IMR-90 (cell line): ENCODE measurements at regions of chr19 and their contacts with region 1.

Region 1: DNA sequence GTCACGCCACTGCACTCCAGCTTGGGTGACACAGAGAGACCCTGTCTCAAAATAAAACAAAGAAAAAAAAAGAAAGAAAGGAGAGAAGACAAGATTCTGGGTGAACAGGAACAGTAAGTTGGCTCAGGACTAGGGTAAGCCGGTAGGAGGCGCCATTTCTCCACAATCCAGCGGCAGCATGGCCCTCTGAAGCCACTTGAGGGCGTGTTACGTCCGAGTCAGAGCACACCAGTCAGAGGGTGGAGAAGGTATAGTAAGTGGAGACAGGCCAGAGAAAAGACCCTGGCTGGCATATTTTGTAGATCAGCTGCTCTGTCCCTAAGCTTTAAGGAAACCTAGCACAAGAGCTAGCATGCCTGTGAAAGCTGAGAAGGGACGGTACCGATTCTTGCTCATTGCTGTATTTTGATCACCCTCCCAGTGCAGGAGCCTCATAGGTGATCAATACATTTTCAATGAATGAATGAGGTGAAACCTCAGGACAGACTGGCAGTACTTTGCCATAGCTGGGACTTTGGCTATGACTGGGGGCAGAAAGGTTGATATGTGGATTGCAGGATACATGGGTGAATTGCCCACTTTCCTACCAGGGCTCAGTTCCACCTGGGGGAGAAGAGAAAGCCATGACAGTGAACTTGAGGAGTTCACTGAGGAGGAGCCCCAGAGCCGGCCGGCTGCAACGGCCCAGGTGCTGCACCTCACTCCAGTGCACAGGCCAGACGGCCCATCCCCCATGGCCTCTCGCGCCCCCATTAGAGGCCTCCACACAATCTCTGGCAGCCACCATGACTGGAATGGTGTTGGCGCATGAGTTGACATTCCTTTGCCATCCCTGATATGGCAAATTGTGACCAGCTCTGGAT is 23.5 kb downstream of the POU2F2 start:
- DNase-seq: peak; percentile 89
- ATAC-seq: peak; percentile 82
- H3K4me3 ChIP-seq: no peak overlapping the region
- H3K27ac ChIP-seq: no peak overlapping the region
- H3K4me1 ChIP-seq: peaks cover 19% of the 10 kb centered on the region
- H3K27me3 ChIP-seq: peaks cover 3% of the 10 kb centered on the region; the same call in 1 of the 2 replicates
- CTCF ChIP-seq: peak; percentile 100; the same call in 1 of the 2 replicates
- POLR2A ChIP-seq: peak; percentile 69
- RAD21 ChIP-seq: peak; percentile 100

Region 2: GRCh38 chr19:41993612-41994483 is 114.9 kb before region 1 on chr19 and contains the start of gene ATP1A3:
- CTCF ChIA-PET with region 1: no interaction called
- POLR2A ChIA-PET with region 1: no interaction called
- dilution Hi-C with region 1: no loop called
- in situ Hi-C with region 1: no loop called
- intact Hi-C with region 1: no loop called
- DNase-seq: peak; percentile 21
- ATAC-seq: peak; percentile 90
- H3K4me3 ChIP-seq: 0 out of 2 replicates have a peak within 1 kb of the TSS, but pooled peaks have one; percentile 16
- H3K27ac ChIP-seq: no peak within 1 kb of the TSS
- H3K4me1 ChIP-seq: no peaks in the 10 kb centered on the region
- H3K27me3 ChIP-seq: peaks cover 65% of the 10 kb centered on the region
- CTCF ChIP-seq: no peak
- POLR2A ChIP-seq: no peak
- RAD21 ChIP-seq: no peak
- total RNA-seq, gene ATP1A3: under 0.01 TPM in 2 replicates

Region 3: GRCh38 chr19:42184401-42184861 is 75.7 kb after region 1 on chr19:
- CTCF ChIA-PET with region 1: interaction called, 9 read pairs
- POLR2A ChIA-PET with region 1: no interaction called
- dilution Hi-C with region 1: no loop called
- in situ Hi-C with region 1: loop called (anchors 5 kb)
- intact Hi-C with region 1: loop called (anchors 1 kb)
- DNase-seq: peak; percentile 81
- ATAC-seq: peak; percentile 98
- H3K4me3 ChIP-seq: no peak overlapping the region
- H3K27ac ChIP-seq: no peak overlapping the region
- H3K4me1 ChIP-seq: peaks cover 4% of the 10 kb centered on the region
- H3K27me3 ChIP-seq: peaks cover 24% of the 10 kb centered on the region
- CTCF ChIP-seq: peak; percentile 85
- POLR2A ChIP-seq: no peak
- RAD21 ChIP-seq: peak; percentile 77

Region 4: GRCh38 chr19:42325273-42325895 is 216.6 kb after region 1 on chr19 and contains the start of gene MEGF8:
- CTCF ChIA-PET with region 1: interaction called, 3 read pairs
- POLR2A ChIA-PET with region 1: no interaction called
- dilution Hi-C with region 1: no loop called
- in situ Hi-C with region 1: no loop called
- intact Hi-C with region 1: loop called (anchors 1 kb)
- DNase-seq: peak; percentile 99
- ATAC-seq: peak; percentile 98
- H3K4me3 ChIP-seq: peak within 1 kb of the TSS; percentile 78
- H3K27ac ChIP-seq: peak within 1 kb of the TSS; percentile 30
- H3K4me1 ChIP-seq: peaks cover 4% of the 10 kb centered on the region
- H3K27me3 ChIP-seq: peaks cover 26% of the 10 kb centered on the region
- CTCF ChIP-seq: peak; percentile 96
- POLR2A ChIP-seq: peak; percentile 72
- RAD21 ChIP-seq: peak; percentile 78
- total RNA-seq, gene MEGF8: 2.3 and 2.5 TPM in 2 replicates

Region 5: DNA sequence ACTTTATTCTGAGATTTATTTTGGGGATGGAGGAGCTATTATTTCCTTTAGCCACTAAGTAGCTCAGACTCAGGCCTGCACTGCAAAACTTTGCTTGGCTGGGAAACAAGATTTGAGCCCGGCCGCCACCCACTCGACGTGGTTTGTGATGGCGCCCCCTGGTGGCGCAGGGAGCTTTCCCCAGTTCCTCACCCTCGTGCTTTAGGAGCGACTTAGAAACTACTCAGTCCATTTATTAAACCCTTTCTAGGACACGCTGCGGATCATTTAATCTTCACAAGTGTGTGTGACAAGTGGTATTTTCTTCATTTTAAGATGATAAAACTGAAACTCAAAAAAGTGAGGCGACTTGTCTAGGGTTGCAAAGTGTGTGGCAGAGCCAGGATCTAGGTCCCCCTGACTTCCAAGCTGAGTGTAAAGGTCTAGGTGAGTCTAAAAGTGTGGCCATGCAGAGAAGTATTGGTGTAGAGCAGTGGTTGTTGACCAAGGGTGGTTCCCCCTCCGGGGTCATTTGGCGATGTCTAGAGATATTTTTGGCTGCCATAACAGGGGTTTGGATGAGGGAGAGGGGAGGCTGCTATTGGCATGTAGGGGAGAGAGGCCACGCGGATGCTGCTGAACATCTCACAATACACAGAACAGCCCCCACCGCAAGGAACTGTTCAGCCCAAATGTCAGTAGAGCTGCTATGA is 331.7 kb after region 1 on chr19:
- CTCF ChIA-PET with region 1: interaction called, 3 read pairs
- POLR2A ChIA-PET with region 1: no interaction called
- dilution Hi-C with region 1: no loop called
- in situ Hi-C with region 1: no loop called
- intact Hi-C with region 1: loop called (anchors 1 kb)
- DNase-seq: peak; percentile 59
- ATAC-seq: peak; percentile 59
- H3K4me3 ChIP-seq: no peak overlapping the region
- H3K27ac ChIP-seq: no peak overlapping the region
- H3K4me1 ChIP-seq: no peaks in the 10 kb centered on the region
- H3K27me3 ChIP-seq: peaks cover 23% of the 10 kb centered on the region
- CTCF ChIP-seq: peak; percentile 84
- POLR2A ChIP-seq: no peak
- RAD21 ChIP-seq: peak; percentile 36; the same call in 1 of the 2 replicates